AG04450 (cell line): ENCODE measurements at regions of chr7 and their contacts with region 1.

Region 1: GRCh38 chr7:47743965-47744591 is 162.2 kb upstream of the TNS3 start:
- DNase-seq: no peak
- H3K4me3 ChIP-seq: no peak overlapping the region
- H3K27ac ChIP-seq: no peak overlapping the region
- H3K27me3 ChIP-seq: no peaks in the 10 kb centered on the region
- CTCF ChIP-seq: no peak

Region 2: DNA sequence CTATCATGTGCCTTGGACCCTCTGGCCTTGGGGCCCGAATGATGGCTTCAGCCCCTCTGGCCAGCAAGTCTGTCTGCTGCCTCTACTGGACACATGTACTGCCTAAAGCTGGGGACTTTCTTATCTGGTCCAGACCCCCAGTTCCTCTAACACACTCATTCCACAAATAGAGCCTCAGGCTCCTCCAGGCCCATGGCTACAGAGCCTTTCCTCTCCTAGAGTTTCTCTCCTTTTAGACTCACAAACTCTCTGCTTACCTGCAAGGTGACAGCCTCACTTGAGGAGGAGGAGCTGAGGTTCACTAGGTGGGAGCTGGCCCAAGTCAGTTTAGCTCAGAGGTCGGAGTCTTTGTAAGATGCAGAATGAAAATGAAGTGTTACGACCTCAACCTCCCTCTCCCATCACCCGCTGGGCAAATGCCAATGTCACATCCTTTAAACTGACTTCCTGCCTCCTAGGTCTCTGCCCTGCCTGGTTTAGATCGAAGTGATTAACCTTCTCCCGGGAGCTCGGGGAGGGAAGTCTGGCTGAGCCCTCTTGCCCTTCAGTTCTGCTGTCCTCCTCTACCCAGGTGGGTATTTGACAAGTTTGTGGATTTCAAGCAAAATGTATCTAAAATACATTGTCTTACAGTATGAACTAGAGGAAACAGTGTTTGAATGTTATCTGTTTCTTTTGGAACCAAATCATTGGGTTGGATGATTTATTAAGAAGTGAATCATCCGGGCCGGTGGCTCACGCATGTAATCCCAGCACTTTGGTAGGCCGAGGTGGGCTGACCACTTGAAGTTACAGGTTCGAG is 90.3 kb before region 1 on chr7:
- CTCF ChIA-PET with region 1: no interaction called
- POLR2A ChIA-PET with region 1: interaction called, 22 read pairs
- DNase-seq: no peak
- H3K4me3 ChIP-seq: no peak overlapping the region
- H3K27ac ChIP-seq: peak overlapping the region; percentile 43
- H3K27me3 ChIP-seq: no peaks in the 10 kb centered on the region
- CTCF ChIP-seq: peak; percentile 18; the same call in 1 of the 2 replicates